PC-9 (cell line): ENCODE measurements at regions of chr12 and their contacts with region 1.

Region 1: DNA sequence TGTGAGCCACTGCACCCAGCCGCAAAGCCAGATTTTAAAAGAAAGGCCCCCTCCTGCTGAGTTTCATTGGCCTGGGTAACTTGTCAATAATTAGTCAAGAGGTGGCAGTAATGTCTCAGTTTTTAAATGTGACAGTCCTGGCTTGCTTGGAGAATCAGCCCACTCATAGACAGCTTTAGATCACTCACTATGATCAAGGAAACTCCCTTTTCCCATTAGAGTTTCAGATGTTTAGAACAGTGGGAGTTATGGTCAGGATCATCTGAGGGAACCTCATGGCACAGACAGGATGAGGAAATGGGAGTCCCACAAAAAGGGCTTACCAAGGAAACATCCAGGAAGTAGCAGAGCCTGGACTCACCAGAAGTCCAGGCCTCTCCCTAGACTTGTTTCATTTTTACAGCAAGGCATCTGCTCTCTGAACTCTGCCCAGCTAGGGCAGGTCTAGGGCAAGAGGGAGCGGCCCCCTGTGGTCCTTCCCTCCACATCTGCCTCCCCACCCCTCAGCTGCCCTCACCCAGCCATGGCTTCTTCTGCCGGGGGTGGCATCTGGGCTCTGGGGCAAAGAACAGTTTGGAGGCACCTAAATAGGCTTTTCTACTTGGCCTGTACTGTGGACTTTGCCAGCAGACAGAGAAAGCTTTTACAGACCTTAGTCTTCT is 11.2 kb downstream of the BCL2L14 start:
- DNase-seq: peak; percentile 24 to 40
- H3K4me3 ChIP-seq: no peak overlapping the region
- H3K27ac ChIP-seq: no peak overlapping the region
- H3K4me1 ChIP-seq: no peaks in the 10 kb centered on the region
- H3K27me3 ChIP-seq: no peaks in the 10 kb centered on the region
- CTCF ChIP-seq: no peak; the same call in 1 of the 2 replicates

Region 2: DNA sequence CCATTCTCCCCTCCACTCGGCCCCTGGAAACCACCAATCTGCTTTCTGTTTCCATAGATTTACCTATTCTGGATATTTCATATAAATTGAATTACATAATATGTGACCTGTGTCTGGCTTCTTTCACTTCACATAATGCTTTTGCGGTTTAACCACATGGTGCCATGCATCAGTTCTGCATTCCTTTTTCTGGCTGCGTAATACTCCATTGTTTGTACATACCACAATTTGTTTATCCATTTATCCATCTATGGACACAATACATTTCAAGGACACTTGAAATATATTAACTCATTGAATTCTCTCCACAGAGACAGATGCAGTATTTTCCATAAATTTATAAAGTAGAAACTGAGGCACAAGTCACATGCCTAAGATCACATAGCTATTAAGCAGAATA is 542.8 kb before region 1 on chr12:
- CTCF ChIA-PET with region 1: interaction called, 11 read pairs
- POLR2A ChIA-PET with region 1: no interaction called
- intact Hi-C with region 1: no loop called
- DNase-seq: no peak
- H3K4me3 ChIP-seq: no peak overlapping the region
- H3K27ac ChIP-seq: no peak overlapping the region
- H3K4me1 ChIP-seq: peaks cover 9% of the 10 kb centered on the region; the same call in 1 of the 2 replicates
- H3K27me3 ChIP-seq: no peaks in the 10 kb centered on the region
- CTCF ChIP-seq: no peak

Region 3: GRCh38 chr12:12654691-12655460 is 572.9 kb after region 1 on chr12:
- CTCF ChIA-PET with region 1: no interaction called
- POLR2A ChIA-PET with region 1: no interaction called
- intact Hi-C with region 1: loop called (anchors 5 kb)
- DNase-seq: no peak
- H3K4me3 ChIP-seq: no peak overlapping the region
- H3K27ac ChIP-seq: no peak overlapping the region
- H3K4me1 ChIP-seq: no peaks in the 10 kb centered on the region
- H3K27me3 ChIP-seq: no peaks in the 10 kb centered on the region
- CTCF ChIP-seq: no peak